HEK293 (cell line): ENCODE measurements at regions of chr12 and their contacts with region 1.

Region 1: DNA sequence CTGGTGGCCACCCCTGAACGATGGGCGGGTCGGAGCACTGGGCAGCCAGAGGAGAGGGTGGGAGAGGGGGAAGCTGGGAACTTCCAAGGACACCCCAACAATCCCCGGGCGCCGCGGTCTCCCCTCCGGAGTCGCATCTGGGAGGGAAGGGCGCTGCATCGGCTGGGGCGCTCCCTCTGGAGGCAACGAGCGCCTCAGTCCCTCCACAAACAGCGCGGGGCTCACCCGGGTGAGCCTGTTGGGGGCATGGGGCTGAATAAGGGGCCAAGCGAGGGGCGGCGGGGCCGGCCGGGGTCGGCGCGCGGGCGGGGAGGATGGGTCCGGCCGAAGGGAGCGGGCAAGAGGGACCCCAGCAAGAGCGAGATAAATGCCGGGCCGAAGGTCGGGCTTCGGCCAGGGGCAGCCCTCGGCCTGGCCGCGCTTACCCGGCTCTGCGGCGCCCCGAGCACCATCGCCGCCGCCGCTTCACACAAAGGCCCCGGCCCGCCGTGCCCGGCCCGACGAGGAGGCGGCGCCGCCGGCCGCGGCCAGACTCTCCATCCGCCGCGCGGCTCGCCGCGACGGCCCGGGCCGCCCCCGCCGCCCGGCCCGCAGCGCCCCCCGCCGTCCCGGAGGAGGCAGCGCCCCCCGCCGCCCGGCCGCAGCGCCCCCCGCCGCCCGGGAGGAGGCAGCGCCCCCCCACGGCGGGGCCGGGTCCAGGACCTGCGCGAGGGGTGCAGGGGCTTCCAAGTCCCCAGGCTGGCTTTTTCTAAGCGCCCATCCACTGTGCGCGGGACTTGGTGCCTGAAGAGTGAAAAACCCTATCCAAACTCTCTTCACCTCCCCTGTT is at the start of gene ZBTB39:
- H3K4me3 ChIP-seq: peak within 1 kb of the TSS; percentile 81
- H3K27ac ChIP-seq: peak within 1 kb of the TSS; percentile 54; the same call in 1 of the 2 replicates
- H3K4me1 ChIP-seq: peaks cover 4% of the 10 kb centered on the region; the same call in 1 of the 2 replicates
- CTCF ChIP-seq: peak; percentile 40; the same call in 1 of the 2 replicates

Region 2: DNA sequence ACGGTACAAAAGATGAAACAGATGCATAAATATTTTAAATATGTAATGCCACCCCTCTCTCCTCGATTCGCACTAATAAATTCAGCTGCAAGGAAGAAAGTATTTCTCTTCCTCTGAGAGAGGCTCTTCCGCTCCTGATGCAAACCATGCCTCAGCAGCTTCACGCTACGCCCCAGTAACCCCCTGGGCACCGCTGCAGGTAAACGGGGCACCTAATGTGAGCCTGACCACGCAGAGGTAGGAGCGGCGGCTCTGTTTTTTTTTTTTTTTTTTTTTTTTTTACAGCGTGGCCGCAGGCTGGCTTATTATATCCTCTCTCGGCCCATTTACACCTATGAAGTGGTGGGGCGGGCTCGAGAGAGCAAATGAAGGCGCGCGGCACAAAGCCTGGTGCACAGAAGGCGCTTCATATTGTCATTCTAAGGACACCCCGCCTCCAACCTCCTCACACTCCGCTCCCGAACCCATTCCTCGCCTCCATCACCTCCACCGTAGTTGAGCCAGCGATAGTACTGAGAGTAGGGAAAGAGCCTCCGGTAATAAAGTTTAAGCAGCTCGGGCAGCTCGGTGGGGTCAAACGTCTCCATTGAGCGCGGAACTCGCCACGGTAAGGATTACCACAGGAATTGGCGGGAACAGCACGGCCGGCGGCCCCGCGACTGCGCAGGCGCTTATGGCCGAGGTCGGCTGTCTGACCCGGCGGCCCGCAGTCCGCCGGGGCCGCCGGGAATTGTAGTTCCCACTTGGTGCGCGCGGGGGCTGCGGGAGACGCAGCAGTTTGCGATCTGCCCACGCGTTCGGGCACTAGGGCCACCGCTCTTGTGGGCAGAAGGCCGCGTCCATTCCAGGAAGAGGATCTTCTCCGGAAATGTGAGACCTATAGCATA is 254.2 kb before region 1 on chr12 and contains the start of gene PRIM1:
- CTCF ChIA-PET with region 1: interaction called, 117 read pairs
- POLR2A ChIA-PET with region 1: interaction called, 4 read pairs
- H3K4me3 ChIP-seq: peak within 1 kb of the TSS; percentile 83
- H3K27ac ChIP-seq: peak within 1 kb of the TSS; percentile 80
- H3K4me1 ChIP-seq: peaks cover 6% of the 10 kb centered on the region
- CTCF ChIP-seq: 0 out of 2 replicates have a peak, but pooled peaks have one; percentile 12

Region 3: DNA sequence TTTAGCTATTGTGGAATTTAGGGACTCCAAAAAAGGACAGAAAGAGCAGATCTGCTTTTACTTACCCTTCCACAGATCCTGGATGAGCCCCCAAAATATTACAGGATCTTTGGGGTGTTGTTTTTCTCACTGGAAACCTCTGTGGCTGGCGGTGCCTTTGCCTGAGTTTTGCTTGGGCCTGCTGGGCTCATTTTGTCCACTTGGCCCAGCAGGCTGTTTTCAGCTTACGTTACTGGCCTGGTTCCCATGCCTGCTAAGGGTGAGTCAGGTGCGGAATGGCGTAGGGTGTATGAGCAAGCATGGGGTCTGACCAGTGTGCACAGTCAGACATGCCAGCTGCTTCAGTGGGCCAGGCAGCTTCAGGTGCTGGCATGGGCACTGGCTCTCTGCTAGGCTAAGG is 197.2 kb before region 1 on chr12:
- CTCF ChIA-PET with region 1: no interaction called
- POLR2A ChIA-PET with region 1: no interaction called
- H3K4me3 ChIP-seq: no peak overlapping the region
- H3K27ac ChIP-seq: no peak overlapping the region
- H3K4me1 ChIP-seq: no peaks in the 10 kb centered on the region
- CTCF ChIP-seq: no peak

Region 4: GRCh38 chr12:56987551-56988053 is 18.6 kb before region 1 on chr12:
- CTCF ChIA-PET with region 1: interaction called, 82 read pairs
- POLR2A ChIA-PET with region 1: no interaction called
- H3K4me3 ChIP-seq: no peak overlapping the region
- H3K27ac ChIP-seq: no peak overlapping the region
- H3K4me1 ChIP-seq: no peaks in the 10 kb centered on the region
- CTCF ChIP-seq: peak; percentile 87

Region 5: DNA sequence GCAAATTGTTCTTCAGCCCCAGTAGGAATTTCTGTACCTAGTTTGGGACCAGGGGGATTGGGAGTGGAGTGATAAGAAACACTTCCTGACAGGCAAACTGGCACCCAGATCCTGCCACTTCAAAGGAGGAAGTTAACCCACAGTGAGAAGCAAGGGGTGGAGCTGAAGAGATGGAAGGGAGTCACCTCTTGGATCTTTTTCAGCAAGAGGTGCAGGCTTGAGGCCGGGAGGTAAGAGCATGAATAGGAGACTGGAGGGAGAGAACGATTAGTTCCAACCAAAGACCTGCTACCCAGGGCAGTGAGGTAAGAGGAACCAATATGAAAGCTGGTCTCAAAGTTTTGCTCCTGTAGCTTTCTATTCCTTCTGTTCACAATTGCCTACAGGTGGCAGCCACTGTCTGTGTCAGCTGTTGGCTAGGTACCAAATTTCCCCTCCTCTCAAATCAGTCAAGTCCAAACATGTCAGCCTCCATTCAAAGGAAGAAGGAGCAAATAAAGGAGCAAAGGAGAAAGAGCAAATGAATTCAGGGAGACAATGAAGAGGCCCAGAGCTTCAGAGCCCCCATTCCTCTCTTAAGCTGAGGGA is 25.0 kb after region 1 on chr12:
- CTCF ChIA-PET with region 1: interaction called, 19 read pairs
- POLR2A ChIA-PET with region 1: no interaction called
- H3K4me3 ChIP-seq: no peak overlapping the region
- H3K27ac ChIP-seq: peak overlapping the region; percentile 73; the same call in 1 of the 2 replicates
- H3K4me1 ChIP-seq: peaks cover 5% of the 10 kb centered on the region
- CTCF ChIP-seq: peak; percentile 62

Region 6: DNA sequence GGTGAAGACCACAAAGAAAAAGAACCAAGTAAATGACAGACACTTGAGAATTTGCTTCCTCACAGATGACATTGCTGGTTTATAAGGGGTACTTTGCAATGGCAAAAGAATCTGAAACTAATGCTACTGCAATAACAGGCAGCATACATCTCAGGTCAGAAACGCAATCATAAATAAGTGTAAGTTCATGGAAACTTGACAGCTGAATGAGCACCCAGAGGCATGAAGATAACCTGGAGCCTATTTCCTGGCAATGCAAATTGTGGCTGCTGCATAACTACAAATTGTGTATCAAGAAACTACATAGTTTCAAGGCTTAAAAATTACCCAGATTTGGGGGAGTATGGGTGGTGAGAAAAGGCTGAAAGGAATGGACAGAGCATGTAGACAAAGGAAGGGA is 52.3 kb after region 1 on chr12:
- CTCF ChIA-PET with region 1: interaction called, 74 read pairs
- POLR2A ChIA-PET with region 1: interaction called, 7 read pairs
- H3K4me3 ChIP-seq: no peak overlapping the region
- H3K27ac ChIP-seq: no peak overlapping the region
- H3K4me1 ChIP-seq: no peaks in the 10 kb centered on the region
- CTCF ChIP-seq: no peak

Region 7: DNA sequence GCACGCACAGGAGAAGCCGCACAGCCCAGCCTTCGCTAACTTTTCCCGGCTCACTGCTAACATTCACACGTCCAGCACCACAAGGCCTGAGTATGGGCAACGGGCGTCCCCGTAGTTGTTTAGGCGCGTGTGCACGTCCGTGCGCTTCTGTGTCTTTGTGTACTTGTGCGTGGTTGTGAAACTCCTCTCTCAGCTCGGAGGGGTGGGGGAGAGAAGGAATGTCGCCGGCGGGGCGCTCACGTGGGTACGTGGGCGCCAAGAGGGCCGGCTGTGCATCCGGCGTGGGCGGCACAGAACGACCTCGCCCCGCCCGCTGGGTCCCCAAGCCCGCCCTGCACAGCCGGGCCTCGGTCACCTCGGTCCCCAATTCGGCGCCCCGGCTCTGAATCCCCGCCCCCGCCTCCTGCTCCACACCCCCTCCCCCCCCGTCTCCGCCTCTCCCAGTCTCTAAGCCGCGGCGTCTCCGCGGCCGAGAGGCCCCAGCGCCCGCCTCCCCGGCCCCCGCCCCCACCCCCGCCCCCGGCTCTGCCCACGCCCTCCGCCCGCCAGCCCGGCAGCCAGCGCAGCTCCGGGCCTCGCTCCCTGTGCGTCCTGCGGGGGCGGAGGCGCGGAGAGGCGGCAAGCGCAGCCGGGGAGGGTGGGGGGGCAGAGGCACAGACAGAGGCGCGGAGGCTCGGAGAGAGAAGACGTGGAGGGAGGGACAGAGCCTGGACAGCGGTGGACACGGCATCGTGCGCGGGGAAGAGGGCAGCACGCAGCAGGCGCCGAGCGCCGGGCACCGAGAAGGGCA is 82.5 kb after region 1 on chr12 and contains the start of gene NAB2:
- CTCF ChIA-PET with region 1: interaction called, 13 read pairs
- POLR2A ChIA-PET with region 1: interaction called, 5 read pairs
- H3K4me3 ChIP-seq: peak within 1 kb of the TSS; percentile 84
- H3K27ac ChIP-seq: peak within 1 kb of the TSS; percentile 80
- H3K4me1 ChIP-seq: peaks cover 12% of the 10 kb centered on the region
- CTCF ChIP-seq: no peak; the same call in 1 of the 2 replicates

Region 8: DNA sequence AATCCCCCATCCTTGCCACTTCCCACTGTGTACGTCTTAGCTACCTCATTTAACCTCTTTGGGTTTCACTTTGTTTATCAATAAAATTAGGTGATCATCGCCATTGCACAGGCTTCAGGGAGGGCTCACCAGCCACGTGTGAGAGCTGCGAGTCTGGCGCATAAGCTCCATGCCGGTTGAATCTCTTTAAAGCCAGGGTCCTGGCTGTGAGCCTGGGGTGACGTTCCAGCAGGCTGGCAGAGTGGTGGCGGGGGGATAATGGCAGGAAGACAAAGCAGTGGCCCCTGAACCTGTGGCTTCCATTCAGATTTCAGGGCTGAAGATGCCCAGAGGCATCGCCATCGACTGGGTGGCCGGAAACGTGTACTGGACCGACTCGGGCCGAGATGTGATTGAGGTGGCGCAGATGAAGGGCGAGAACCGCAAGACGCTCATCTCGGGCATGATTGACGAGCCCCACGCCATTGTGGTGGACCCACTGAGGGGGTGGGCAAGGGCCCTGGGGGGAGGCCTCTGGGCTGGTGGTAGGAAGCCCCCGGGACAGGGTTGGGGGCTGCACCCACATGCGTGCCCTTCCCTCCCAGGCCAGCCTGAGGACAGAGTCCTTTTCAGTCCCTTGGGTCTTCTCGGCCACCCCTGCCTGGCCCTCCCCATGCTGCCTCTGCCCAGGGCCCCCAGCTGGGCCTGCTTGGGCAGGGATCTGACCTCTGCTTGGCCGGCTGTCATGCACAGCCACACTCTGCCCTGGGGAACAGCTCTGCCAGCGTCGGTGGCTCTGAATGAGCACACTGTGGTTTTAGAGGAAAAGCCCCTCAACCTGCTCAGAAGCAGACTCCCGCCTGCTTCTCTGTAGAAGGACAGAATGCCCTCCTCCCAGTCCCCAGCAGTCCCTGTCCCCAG is 201.8 kb after region 1 on chr12:
- CTCF ChIA-PET with region 1: no interaction called
- POLR2A ChIA-PET with region 1: no interaction called
- H3K4me3 ChIP-seq: no peak overlapping the region
- H3K27ac ChIP-seq: no peak overlapping the region
- H3K4me1 ChIP-seq: no peaks in the 10 kb centered on the region; the same call in 1 of the 2 replicates
- CTCF ChIP-seq: no peak